K562 (cell line): ENCODE measurements at regions of chr3 and their contacts with region 1.

Region 1: GRCh38 chr3:80771085-80771484 is 990.4 kb downstream of the GBE1 start:
- DNase-seq: peak; percentile 15 to 80 (median 33)
- ATAC-seq: peak; percentile 84
- H3K4me3 ChIP-seq: peak overlapping the region; percentile 50
- H3K27ac ChIP-seq: peak overlapping the region; percentile 87
- H3K4me1 ChIP-seq: no peaks in the 10 kb centered on the region
- H3K27me3 ChIP-seq: no peaks in the 10 kb centered on the region
- CTCF ChIP-seq: no peak
- EP300 ChIP-seq: peak; percentile 20; the same call in 1 of the 2 replicates
- POLR2A ChIP-seq: peak; percentile 68
- RAD21 ChIP-seq: no peak

Region 2: DNA sequence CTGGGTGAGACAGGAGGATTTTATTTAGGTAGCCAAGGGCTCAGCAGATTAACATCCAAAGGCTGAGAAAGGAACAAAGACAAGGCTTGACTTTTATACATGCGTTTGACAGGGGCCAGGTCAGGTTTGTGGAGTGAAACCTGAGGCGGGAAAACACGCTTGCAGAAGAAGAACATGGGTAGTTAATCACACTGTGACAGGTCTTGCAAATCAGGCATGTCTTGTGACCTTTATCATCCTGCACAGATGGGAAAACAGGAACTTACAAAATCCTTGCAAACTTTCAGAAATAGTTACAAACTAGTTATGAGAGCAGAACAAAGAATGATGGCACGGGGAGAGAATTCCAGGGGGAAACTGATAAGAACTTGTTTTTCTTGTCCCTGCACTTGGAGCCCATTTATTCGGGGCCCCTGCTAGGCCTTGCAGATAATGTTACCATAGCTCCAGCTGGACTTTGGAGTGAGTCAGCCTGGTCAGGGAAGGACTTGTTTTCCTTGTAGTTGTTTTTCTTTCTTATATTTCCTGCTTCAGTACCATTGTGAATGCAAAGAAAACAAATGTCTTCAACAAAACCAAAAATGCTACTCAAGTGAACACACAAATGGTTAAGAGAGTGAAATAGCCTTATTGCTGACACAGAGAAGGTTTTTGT is 37.4 kb before region 1 on chr3:
- CTCF ChIA-PET with region 1: no interaction called
- POLR2A ChIA-PET with region 1: no interaction called
- in situ Hi-C with region 1: no loop called
- intact Hi-C with region 1: loop called (anchors 2 kb)
- DNase-seq: peak; percentile 4 to 80 (median 19)
- ATAC-seq: peak; percentile 91
- H3K4me3 ChIP-seq: no peak overlapping the region
- H3K27ac ChIP-seq: peak overlapping the region; percentile 61
- H3K4me1 ChIP-seq: no peaks in the 10 kb centered on the region; a peak in 1 of 5 replicates
- H3K27me3 ChIP-seq: no peaks in the 10 kb centered on the region
- CTCF ChIP-seq: no peak
- EP300 ChIP-seq: peak; percentile 83
- POLR2A ChIP-seq: no peak
- RAD21 ChIP-seq: no peak